Dendritic cell treated with granulocyte-macrophage colony-stimulating factor and Interleukin-4, amounts not matched to agents 40 ng/mL and 50 ng/mL, for 4 days (primary cell): ENCODE measurements at regions of chr9 and their contacts with region 1.

Region 1: GRCh38 chr9:128771745-128772519 is at the start of gene ZER1:
- H3K4me3 Mint-ChIP-seq: peak within 1 kb of the TSS; percentile 92
- H3K27ac Mint-ChIP-seq: peak within 1 kb of the TSS; percentile 93
- H3K4me1 Mint-ChIP-seq: peaks cover 36% of the 10 kb centered on the region
- H3K27me3 Mint-ChIP-seq: no peaks in the 10 kb centered on the region

Region 2: GRCh38 chr9:128786681-128787601 is 15.0 kb after region 1 on chr9 and contains the start of gene TBC1D13:
- intact Hi-C with region 1: loop called (anchors 1 kb)
- H3K4me3 Mint-ChIP-seq: peak within 1 kb of the TSS; percentile 92
- H3K27ac Mint-ChIP-seq: peak within 1 kb of the TSS; percentile 83
- H3K4me1 Mint-ChIP-seq: peaks cover 33% of the 10 kb centered on the region
- H3K27me3 Mint-ChIP-seq: no peaks in the 10 kb centered on the region

Region 3: DNA sequence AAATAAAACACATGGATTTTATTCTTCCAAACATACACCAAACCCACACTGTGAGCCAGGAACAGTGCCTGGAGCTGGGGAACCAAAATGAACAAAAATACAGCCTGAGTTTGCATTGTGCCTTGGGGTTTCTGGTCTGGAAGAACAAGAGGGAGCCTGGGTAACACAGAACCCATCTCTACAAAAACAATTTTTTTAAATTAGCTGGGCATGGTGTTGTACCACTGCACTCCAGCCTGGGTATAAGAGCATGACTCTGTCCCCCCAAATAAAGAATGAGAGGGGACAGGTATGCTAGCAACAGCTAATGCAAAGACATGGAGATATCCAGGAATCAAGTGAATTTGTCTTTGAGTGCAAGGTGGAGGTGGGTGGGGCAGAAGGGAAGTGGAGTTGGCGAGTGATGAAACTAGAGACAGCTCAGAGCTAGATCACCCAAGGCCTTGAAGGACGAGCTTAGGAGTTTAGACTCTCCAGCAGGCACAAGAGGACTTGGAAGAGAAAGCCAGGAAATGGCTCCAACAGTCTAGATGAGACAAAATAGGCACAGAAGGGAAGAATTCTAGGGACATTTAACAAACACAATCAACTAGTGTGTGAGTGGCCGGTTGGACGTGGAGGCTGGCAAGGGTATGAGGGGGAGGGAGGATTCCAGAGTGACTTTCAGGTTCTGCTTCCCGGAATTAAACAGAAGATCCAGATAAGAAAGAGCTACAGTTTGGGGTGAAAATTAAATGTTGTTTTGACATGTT is 1223.7 kb after region 1 on chr9:
- intact Hi-C with region 1: no loop called
- H3K4me3 Mint-ChIP-seq: peak overlapping the region; percentile 65
- H3K27ac Mint-ChIP-seq: peak overlapping the region; percentile 92
- H3K4me1 Mint-ChIP-seq: peaks cover 53% of the 10 kb centered on the region
- H3K27me3 Mint-ChIP-seq: no peaks in the 10 kb centered on the region